Mammary epithelial cell (primary cell): ENCODE measurements at regions of chr5 and their contacts with region 1.

Region 1: DNA sequence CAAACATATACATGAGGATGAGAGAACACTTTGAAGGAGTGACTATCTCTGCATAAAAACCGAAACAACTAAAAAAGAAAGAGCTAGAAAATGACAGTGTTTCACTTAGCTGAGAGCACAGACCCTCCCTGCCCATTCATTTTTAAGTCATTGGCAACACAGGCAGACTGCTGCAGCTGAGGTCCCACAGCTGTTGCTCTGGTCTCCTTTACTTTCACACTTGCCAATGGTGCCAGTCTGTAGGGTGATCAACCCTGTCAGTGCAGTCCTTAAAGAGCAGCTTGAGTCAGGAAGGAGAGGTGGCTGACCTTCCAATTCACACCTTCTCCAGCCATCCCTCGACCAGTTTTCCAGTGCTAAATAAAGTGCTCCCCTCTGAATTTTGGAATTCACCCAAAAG is 508.3 kb upstream of the CCNG1 start:
- DNase-seq: no peak
- H3K4me3 ChIP-seq: no peak overlapping the region
- H3K27ac ChIP-seq: no peak overlapping the region
- H3K4me1 ChIP-seq: no peaks in the 10 kb centered on the region
- H3K27me3 ChIP-seq: no peaks in the 10 kb centered on the region
- CTCF ChIP-seq: no peak

Region 2: DNA sequence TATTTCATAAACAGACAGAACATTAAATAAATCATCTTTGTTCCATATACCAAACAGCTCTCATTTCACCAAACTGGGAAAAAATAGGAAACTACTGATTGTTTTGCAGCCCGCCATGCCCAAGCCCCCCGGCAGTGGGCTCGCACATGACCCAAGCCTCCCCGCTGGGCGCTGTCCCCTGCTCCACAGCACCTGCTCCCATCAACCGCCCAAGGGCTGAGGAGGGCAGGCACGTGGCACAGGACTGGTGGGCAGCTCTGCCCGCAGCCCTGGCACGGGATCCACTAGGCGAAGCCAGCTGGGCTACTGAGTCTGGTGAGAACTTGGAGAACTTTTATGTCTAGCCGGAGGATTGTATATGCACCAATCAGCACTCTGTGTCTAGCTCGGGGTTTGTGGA is 46.5 kb before region 1 on chr5:
- CTCF ChIA-PET with region 1: no interaction called
- dilution Hi-C with region 1: loop called (anchors 5 kb)
- in situ Hi-C with region 1: no loop called
- intact Hi-C with region 1: no loop called
- DNase-seq: no peak
- H3K4me3 ChIP-seq: no peak overlapping the region
- H3K27ac ChIP-seq: no peak overlapping the region
- H3K4me1 ChIP-seq: no peaks in the 10 kb centered on the region
- H3K27me3 ChIP-seq: no peaks in the 10 kb centered on the region
- CTCF ChIP-seq: no peak

Region 3: DNA sequence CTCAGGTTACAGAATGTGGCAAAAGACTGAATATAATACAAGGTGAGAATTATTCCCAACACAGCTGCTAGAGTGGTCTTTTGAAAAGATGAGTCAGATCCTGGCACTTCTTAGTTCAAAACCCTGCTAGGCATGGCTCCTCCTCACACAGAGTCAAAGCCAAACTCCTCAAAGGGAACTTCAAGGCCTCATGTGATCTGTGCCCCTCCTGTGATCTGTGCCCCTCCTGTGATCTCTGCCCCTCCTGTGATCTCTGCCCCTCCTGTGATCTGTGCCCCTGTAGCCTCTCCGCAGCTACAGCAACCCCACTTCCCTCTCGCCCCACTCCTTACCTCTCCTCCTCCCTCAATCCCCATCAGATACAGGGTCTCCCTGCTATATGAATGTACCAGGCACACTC is 17.2 kb before region 1 on chr5:
- CTCF ChIA-PET with region 1: no interaction called
- dilution Hi-C with region 1: no loop called
- in situ Hi-C with region 1: no loop called
- intact Hi-C with region 1: no loop called
- DNase-seq: no peak
- H3K4me3 ChIP-seq: no peak overlapping the region
- H3K27ac ChIP-seq: no peak overlapping the region
- H3K4me1 ChIP-seq: no peaks in the 10 kb centered on the region
- H3K27me3 ChIP-seq: no peaks in the 10 kb centered on the region
- CTCF ChIP-seq: no peak